CD4-positive, alpha-beta memory T cell (primary cell): ENCODE measurements at regions of chr5 and their contacts with region 1.

Region 1: GRCh38 chr5:132866342-132867045 is at the starts of genes GDF9 and UQCRQ:
- DNase-seq: peak; percentile 92 to 98 (median 96)
- H3K4me3 ChIP-seq: peak within 1 kb of the TSS; percentile 79 to 90
- H3K4me3 Mint-ChIP-seq: peak within 1 kb of the TSS; percentile 95 to 100 (median 100)
- H3K27ac ChIP-seq: peak within 1 kb of the TSS; percentile 93
- H3K27ac Mint-ChIP-seq: peak within 1 kb of the TSS; percentile 96 to 100 (median 100)
- H3K4me1 ChIP-seq: peaks cover 21% of the 10 kb centered on the region
- H3K4me1 Mint-ChIP-seq: peaks cover 18 to 29% (median 22%) of the 10 kb centered on the region in 4 donors
- H3K27me3 ChIP-seq: no peaks in the 10 kb centered on the region
- H3K27me3 Mint-ChIP-seq: no peaks in the 10 kb centered on the region
- total RNA-seq, gene GDF9: 1.1 to 1.9 TPM
- total RNA-seq, gene UQCRQ: 124 to 127 TPM

Region 2: DNA sequence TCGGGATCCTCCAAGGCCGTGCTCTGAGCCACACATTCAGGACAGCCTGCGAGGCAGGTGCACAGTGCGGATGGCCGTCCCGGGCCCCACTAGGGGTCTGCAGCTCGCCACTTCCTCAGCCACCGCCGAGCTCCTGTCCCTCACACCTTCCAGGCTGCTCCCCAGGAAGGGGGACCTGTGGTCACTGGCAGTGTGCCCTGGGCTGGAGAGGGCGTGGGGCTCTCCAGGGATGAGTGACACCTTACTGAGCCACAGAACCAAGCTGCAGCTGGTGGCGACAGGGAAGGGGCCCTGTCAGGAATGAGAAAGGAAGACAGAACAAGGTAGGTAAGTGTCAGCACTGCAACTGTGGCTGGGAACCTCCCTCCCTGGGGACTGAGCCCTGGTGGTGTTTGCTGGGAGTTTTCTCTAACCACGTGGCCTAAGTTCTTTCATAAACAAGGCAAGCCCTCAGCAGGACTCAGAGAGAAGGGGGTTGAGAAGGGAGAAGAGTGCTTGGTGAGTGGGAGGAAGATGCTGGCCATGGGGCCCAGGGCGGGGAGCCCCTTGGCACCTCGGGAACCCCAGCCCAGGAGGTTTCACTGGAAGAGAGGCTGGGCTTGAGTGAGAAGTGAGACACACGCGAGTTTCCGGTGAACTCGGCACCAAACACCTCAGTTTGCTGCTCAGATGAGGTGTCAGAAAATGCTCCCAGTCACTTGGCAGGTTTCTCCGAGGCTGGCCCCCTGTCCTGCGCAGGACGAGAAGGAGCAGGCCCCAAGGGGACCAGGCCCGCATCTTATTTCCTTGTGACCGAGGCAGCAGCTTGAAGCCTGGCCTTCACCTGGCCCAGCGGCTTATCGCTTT is 203.3 kb before region 1 on chr5:
- CTCF ChIA-PET with region 1: no interaction called
- POLR2A ChIA-PET with region 1: no interaction called
- intact Hi-C with region 1: no loop called
- DNase-seq: peak in 4 of 5 donors; percentile 26 to 53 (median 31)
- H3K4me3 ChIP-seq: no peak overlapping the region
- H3K4me3 Mint-ChIP-seq: peak overlapping the region; percentile 17 to 81 (median 62)
- H3K27ac ChIP-seq: peak overlapping the region; percentile 29
- H3K27ac Mint-ChIP-seq: peak overlapping the region; percentile 80 to 92 (median 89)
- H3K4me1 ChIP-seq: peaks cover 22% of the 10 kb centered on the region
- H3K4me1 Mint-ChIP-seq: peaks cover 11 to 21% (median 16%) of the 10 kb centered on the region in 4 donors
- H3K27me3 ChIP-seq: no peaks in the 10 kb centered on the region
- H3K27me3 Mint-ChIP-seq: peaks cover 0 to 6% of the 10 kb centered on the region in 2 donors

Region 3: GRCh38 chr5:132746954-132747615 is 119.4 kb before region 1 on chr5 and contains the start of gene CCNI2:
- CTCF ChIA-PET with region 1: interaction called, 3 read pairs
- POLR2A ChIA-PET with region 1: interaction called, 3 read pairs
- intact Hi-C with region 1: loop called (anchors 5 kb)
- DNase-seq: peak; percentile 71 to 76 (median 73)
- H3K4me3 ChIP-seq: peak within 1 kb of the TSS in 1 of 2 donors; percentile 58
- H3K4me3 Mint-ChIP-seq: peak within 1 kb of the TSS; percentile 78 to 87 (median 85)
- H3K27ac ChIP-seq: peak within 1 kb of the TSS; percentile 61
- H3K27ac Mint-ChIP-seq: peak within 1 kb of the TSS; percentile 74 to 89 (median 79)
- H3K4me1 ChIP-seq: peaks cover 7% of the 10 kb centered on the region
- H3K4me1 Mint-ChIP-seq: peaks cover 8 to 28% (median 15%) of the 10 kb centered on the region in 4 donors
- H3K27me3 ChIP-seq: no peaks in the 10 kb centered on the region
- H3K27me3 Mint-ChIP-seq: no peaks in the 10 kb centered on the region
- total RNA-seq, gene CCNI2: 12.5 to 13.0 TPM

Region 4: GRCh38 chr5:132883261-132883834 is 16.9 kb after region 1 on chr5:
- CTCF ChIA-PET with region 1: interaction called, 23 read pairs
- POLR2A ChIA-PET with region 1: interaction called, 4 read pairs
- intact Hi-C with region 1: no loop called
- DNase-seq: peak in 4 of 5 donors; percentile 24 to 33 (median 28)
- H3K4me3 ChIP-seq: no peak overlapping the region
- H3K4me3 Mint-ChIP-seq: no peak overlapping the region
- H3K27ac ChIP-seq: no peak overlapping the region
- H3K27ac Mint-ChIP-seq: peak overlapping the region in 5 of 7 donors; percentile 36 to 84 (median 76)
- H3K4me1 ChIP-seq: no peaks in the 10 kb centered on the region
- H3K4me1 Mint-ChIP-seq: peaks cover 0 to 3% (median 0%) of the 10 kb centered on the region in 4 donors
- H3K27me3 ChIP-seq: no peaks in the 10 kb centered on the region
- H3K27me3 Mint-ChIP-seq: no peaks in the 10 kb centered on the region

Region 5: GRCh38 chr5:132963175-132964104 is 96.9 kb after region 1 on chr5 and contains the start of gene AFF4:
- CTCF ChIA-PET with region 1: no interaction called
- POLR2A ChIA-PET with region 1: interaction called, 18 read pairs
- intact Hi-C with region 1: loop called (anchors 2 kb)
- DNase-seq: peak; percentile 84 to 89 (median 87)
- H3K4me3 ChIP-seq: peak within 1 kb of the TSS; percentile 62 to 88
- H3K4me3 Mint-ChIP-seq: peak within 1 kb of the TSS; percentile 90 to 99 (median 98)
- H3K27ac ChIP-seq: peak within 1 kb of the TSS; percentile 91
- H3K27ac Mint-ChIP-seq: peak within 1 kb of the TSS; percentile 96 to 100 (median 100)
- H3K4me1 ChIP-seq: peaks cover 38% of the 10 kb centered on the region
- H3K4me1 Mint-ChIP-seq: peaks cover 20 to 45% (median 31%) of the 10 kb centered on the region in 4 donors
- H3K27me3 ChIP-seq: no peaks in the 10 kb centered on the region
- H3K27me3 Mint-ChIP-seq: no peaks in the 10 kb centered on the region
- total RNA-seq, gene AFF4: 60.4 to 61.6 TPM

Region 6: DNA sequence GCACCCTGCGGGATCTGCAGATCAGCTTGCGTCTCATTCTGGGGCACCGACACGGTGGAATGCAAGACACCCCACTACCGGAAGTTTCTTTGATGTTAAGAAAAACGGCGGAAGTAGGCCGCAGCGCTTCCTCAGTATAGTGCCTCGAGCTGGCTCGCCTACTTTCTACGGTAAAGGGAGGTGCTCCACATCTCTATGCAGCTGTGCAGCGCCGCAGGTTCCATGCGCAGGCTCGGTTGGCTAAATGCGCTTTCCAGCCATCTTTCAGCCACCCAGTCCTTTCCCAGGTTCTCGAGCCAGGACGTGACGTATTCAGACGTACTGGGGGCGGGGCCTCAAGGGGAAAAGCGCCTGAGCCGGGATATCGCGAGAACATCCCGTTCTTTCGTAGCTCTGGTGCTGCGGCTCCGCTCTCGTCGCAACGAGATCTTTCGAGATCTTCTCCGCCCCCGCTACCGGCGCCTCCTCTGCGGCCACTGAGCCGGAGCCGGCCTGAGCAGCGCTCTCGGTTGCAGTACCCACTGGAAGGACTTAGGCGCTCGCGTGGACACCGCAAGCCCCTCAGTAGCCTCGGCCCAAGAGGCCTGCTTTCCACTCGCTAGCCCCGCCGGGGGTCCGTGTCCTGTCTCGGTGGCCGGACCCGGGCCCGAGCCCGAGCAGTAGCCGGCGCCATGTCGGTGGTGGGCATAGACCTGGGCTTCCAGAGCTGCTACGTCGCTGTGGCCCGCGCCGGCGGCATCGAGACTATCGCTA is 185.3 kb after region 1 on chr5 and contains the start of gene HSPA4:
- CTCF ChIA-PET with region 1: no interaction called
- POLR2A ChIA-PET with region 1: interaction called, 11 read pairs
- intact Hi-C with region 1: loop called (anchors 1 kb)
- DNase-seq: peak; percentile 97 to 99 (median 98)
- H3K4me3 ChIP-seq: peak within 1 kb of the TSS; percentile 97 to 99
- H3K4me3 Mint-ChIP-seq: peak within 1 kb of the TSS; percentile 96 to 99 (median 98)
- H3K27ac ChIP-seq: peak within 1 kb of the TSS; percentile 99
- H3K27ac Mint-ChIP-seq: peak within 1 kb of the TSS; percentile 99 to 100 (median 100)
- H3K4me1 ChIP-seq: peaks cover 54% of the 10 kb centered on the region
- H3K4me1 Mint-ChIP-seq: peaks cover 31 to 65% (median 49%) of the 10 kb centered on the region in 4 donors
- H3K27me3 ChIP-seq: no peaks in the 10 kb centered on the region
- H3K27me3 Mint-ChIP-seq: no peaks in the 10 kb centered on the region
- total RNA-seq, gene HSPA4: 55.9 to 58.1 TPM